Breast epithelium (tissue), 4 donors: ENCODE measurements at regions of chr2 and their contacts with region 1.

Region 1: DNA sequence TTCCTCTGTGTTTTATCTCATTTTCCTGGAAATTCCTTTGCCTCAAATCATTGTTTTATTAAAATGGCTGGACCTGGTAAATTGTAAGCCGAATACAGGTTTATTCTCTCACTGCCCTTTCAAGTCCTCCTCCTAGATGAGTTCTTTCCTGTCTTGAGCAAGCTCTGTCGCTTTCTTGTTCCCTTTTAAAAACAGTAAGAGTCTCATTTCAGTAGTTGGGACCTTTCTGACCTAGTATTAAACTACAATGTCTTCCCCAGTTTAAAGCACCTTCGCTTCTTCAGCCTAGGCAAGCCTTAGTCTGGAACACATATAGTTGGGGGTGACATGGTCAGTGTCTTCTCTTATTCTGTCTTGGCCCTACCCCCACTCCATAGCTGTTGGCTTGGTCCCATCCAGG is 40.9 kb upstream of the SP140L start:
- DNase-seq: no peak
- H3K4me3 ChIP-seq: no peak overlapping the region
- H3K27ac ChIP-seq: no peak overlapping the region
- H3K4me1 ChIP-seq: no peaks in the 10 kb centered on the region
- H3K27me3 ChIP-seq: no peaks in the 10 kb centered on the region
- CTCF ChIP-seq: no peak
- POLR2A ChIP-seq: no peak

Region 2: GRCh38 chr2:230296917-230297316 is 10.9 kb after region 1 on chr2:
- intact Hi-C with region 1: loop called (anchors 1 kb)
- DNase-seq: no peak
- H3K4me3 ChIP-seq: no peak overlapping the region
- H3K27ac ChIP-seq: no peak overlapping the region
- H3K4me1 ChIP-seq: no peaks in the 10 kb centered on the region
- H3K27me3 ChIP-seq: no peaks in the 10 kb centered on the region
- CTCF ChIP-seq: no peak
- POLR2A ChIP-seq: no peak